Heart right ventricle (tissue), 16 donors: ENCODE measurements at regions of chr14 and their contacts with region 1.

Region 1: DNA sequence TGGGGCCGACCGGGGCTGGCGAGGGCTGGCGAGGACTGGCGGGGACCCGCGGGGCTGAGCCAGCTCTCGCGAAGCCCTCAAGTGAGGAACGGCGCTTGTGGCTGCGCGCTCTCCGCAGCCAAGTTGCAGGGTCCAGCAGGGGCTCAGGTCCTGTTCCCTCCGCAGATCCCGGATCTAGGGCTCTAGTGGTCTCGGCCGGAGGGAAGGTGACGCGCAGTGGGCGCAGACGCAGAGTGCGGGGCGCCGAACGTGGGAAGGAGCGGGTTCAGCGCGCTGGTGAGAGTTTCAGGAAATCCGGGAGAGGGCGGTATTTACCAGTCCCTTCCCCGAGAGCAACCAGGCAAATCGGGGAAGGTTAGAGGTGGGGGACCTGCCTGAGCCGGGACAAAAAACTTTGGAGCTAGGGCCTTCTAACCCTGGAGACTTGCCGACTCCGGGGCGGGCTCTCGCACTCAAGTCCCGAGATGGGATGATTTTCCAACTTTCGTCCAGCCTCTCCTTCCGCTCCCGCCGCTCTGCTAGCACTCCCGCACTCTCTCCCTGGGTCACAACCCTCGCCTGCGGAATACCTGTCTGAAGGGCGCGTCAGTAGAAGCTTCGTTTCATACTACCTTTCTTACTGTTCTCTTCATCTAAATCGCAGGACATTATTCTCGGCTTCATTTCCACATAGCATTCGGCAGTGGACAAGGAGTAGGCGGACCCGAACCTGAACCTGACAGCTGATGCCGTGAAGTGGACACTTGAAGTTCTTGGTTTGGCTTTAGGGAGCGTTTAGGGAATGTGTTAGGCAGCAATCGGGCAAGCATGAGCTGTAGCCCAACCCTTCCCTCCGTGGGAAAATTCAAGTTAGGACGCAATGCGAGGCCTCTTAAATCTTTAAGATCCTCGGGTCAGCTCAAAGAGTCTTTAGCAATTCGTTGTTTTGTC is 13.6 kb upstream of the PAX9 start:
- DNase-seq: no peak
- ATAC-seq: peak; percentile 30 to 88 (median 60)
- H3K4me3 ChIP-seq: peak overlapping the region; percentile 4 to 42 (median 29)
- H3K27ac ChIP-seq: no peak overlapping the region
- H3K4me1 ChIP-seq: peaks cover 0 to 20% (median 16%) of the 10 kb centered on the region in 9 donors
- H3K27me3 ChIP-seq: peaks cover 33 to 97% (median 94%) of the 10 kb centered on the region in 7 donors
- CTCF ChIP-seq: peak in 7 of 9 donors; percentile 35 to 58 (median 43)

Region 2: GRCh38 chr14:36556811-36557433 is 91.2 kb before region 1 on chr14:
- intact Hi-C with region 1: no loop called
- DNase-seq: no peak
- ATAC-seq: no peak
- H3K4me3 ChIP-seq: no peak overlapping the region
- H3K27ac ChIP-seq: no peak overlapping the region
- H3K4me1 ChIP-seq: no peaks in the 10 kb centered on the region
- H3K27me3 ChIP-seq: peaks cover 0 to 45% (median 25%) of the 10 kb centered on the region in 7 donors
- CTCF ChIP-seq: peak; percentile 41 to 80 (median 75)

Region 3: GRCh38 chr14:36634248-36634647 is 13.8 kb before region 1 on chr14:
- intact Hi-C with region 1: no loop called
- DNase-seq: no peak
- ATAC-seq: no peak
- H3K4me3 ChIP-seq: no peak overlapping the region
- H3K27ac ChIP-seq: no peak overlapping the region
- H3K4me1 ChIP-seq: no peaks in the 10 kb centered on the region
- H3K27me3 ChIP-seq: peaks cover 0 to 68% (median 16%) of the 10 kb centered on the region in 7 donors
- CTCF ChIP-seq: no peak

Region 4: GRCh38 chr14:36936013-36936678 is 288.1 kb after region 1 on chr14:
- intact Hi-C with region 1: loop called in 6 of 10 experiments (anchors 5 kb)
- DNase-seq: no peak
- ATAC-seq: no peak
- H3K4me3 ChIP-seq: no peak overlapping the region
- H3K27ac ChIP-seq: no peak overlapping the region
- H3K4me1 ChIP-seq: no peaks in the 10 kb centered on the region
- H3K27me3 ChIP-seq: peaks cover 0 to 24% (median 8%) of the 10 kb centered on the region in 7 donors
- CTCF ChIP-seq: no peak

Region 5: DNA sequence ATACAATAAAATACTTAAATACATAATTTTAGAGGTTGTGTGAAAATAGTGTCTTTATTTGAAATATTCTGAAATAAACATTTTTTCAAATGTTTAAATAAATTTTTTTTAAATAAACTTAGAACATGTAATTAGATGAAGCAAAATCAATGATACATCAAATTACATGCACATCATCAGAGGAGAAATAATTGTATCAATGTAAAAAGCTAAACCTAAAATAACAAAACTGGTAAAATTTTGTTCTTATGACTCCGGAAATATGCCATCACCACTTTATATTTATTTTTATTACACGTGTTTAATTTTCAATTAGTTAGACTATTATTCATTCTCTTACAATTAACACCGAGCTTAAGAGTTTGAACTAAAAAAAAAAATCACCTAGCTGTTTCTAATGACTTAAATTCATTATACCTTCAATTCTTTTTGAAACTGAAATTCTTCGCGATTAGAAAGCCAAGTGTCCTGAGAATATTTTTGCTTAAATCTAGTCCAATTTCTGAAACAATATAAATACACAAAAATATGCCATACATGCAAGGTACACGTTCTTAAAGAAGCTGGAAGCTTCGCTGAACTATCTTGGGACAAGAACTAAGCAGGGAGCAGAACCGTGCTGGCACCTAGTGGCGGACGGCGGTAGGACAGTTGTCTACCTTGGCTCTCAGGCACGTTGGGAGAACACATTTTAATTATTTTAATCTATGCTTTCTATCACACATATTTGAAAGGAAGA is 293.9 kb after region 1 on chr14:
- intact Hi-C with region 1: loop called in 9 of 10 experiments (anchors 2 to 5 kb)
- DNase-seq: peak; percentile 48 to 74
- ATAC-seq: peak in 4 of 8 donors; percentile 54 to 85 (median 67)
- H3K4me3 ChIP-seq: no peak overlapping the region
- H3K27ac ChIP-seq: no peak overlapping the region
- H3K4me1 ChIP-seq: no peaks in the 10 kb centered on the region
- H3K27me3 ChIP-seq: peaks cover 0 to 43% (median 14%) of the 10 kb centered on the region in 7 donors
- CTCF ChIP-seq: peak; percentile 76 to 97 (median 91)

Region 6: DNA sequence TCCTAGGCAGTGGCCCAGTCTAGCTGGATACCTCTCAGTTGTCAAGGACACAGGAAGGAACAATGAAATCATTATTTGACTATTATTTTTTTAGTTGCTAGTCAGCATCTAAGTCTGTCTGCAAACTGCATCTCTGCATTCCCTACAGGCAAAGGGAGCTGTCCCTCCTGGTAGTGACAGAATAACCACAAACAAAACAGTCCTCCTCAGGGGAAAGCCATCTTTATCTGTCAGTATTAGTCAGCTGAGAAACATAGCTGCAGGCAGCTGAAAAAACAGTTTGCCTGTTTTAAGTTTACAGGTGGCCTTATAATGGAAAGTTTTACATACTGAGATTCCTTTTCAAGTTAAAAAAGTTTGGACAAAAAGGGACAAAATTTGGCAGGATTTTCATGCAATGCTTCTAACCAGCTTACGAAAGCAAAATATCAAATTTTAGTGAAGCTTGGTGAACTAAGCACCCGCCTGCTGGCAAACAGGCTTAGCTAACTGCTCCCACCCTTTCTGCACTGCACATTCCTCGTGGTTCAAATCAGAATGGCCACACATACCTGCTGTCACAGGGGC is 494.8 kb after region 1 on chr14:
- intact Hi-C with region 1: loop called in 1 of 10 experiments (anchors 10 kb)
- DNase-seq: no peak
- ATAC-seq: peak in 1 of 8 donors; percentile 28
- H3K4me3 ChIP-seq: no peak overlapping the region
- H3K27ac ChIP-seq: no peak overlapping the region
- H3K4me1 ChIP-seq: no peaks in the 10 kb centered on the region
- H3K27me3 ChIP-seq: no peaks in the 10 kb centered on the region
- CTCF ChIP-seq: no peak

Region 7: DNA sequence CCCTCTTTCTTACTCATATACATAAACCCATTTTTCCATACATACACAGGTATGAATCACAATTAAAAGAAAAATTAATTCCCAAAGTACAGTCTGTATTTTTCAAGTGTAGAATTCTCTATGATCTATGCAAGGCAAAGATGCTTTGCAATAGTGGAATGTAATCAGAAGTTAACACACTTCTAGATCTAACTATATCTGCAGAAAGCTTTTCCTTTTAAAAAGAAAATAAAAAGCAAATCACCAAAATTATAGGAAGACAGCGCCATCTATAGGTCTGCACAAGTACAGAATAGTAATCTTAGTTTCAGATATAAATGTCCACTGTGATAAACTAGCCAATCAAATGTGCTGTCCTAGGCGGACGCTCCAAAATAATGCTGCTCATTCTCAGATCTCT is 502.3 kb after region 1 on chr14:
- intact Hi-C with region 1: loop called in 3 of 10 experiments (anchors 10 kb)
- DNase-seq: no peak
- ATAC-seq: no peak
- H3K4me3 ChIP-seq: no peak overlapping the region
- H3K27ac ChIP-seq: no peak overlapping the region
- H3K4me1 ChIP-seq: no peaks in the 10 kb centered on the region
- H3K27me3 ChIP-seq: no peaks in the 10 kb centered on the region
- CTCF ChIP-seq: peak in 8 of 9 donors; percentile 47 to 75 (median 68)